Breast epithelium (tissue), 4 donors: ENCODE measurements at regions of chr10 and their contacts with region 1.

Region 1: GRCh38 chr10:77116904-77117303 is 520.7 kb downstream of the KCNMA1 start:
- DNase-seq: no peak
- H3K4me3 ChIP-seq: no peak overlapping the region
- H3K27ac ChIP-seq: no peak overlapping the region
- H3K4me1 ChIP-seq: no peaks in the 10 kb centered on the region
- H3K27me3 ChIP-seq: no peaks in the 10 kb centered on the region
- CTCF ChIP-seq: no peak
- POLR2A ChIP-seq: no peak

Region 2: GRCh38 chr10:76667408-76668370 is 449.2 kb before region 1 on chr10:
- intact Hi-C with region 1: loop called (anchors 5 kb)
- DNase-seq: no peak
- H3K4me3 ChIP-seq: no peak overlapping the region
- H3K27ac ChIP-seq: peak overlapping the region in 1 of 2 donors; percentile 17
- H3K4me1 ChIP-seq: no peaks in the 10 kb centered on the region
- H3K27me3 ChIP-seq: no peaks in the 10 kb centered on the region
- CTCF ChIP-seq: no peak
- POLR2A ChIP-seq: no peak